IMR-90 (cell line): ENCODE measurements at regions of chr11 and their contacts with region 1.

Region 1: GRCh38 chr11:62081378-62082291 is 42.2 kb upstream of the INCENP start:
- DNase-seq: peak; percentile 66
- ATAC-seq: peak; percentile 99
- H3K4me3 ChIP-seq: no peak overlapping the region
- H3K27ac ChIP-seq: no peak overlapping the region
- H3K4me1 ChIP-seq: peaks cover 2% of the 10 kb centered on the region; the same call in 1 of the 2 replicates
- H3K27me3 ChIP-seq: no peaks in the 10 kb centered on the region
- CTCF ChIP-seq: peak; percentile 98
- POLR2A ChIP-seq: peak; percentile 45; the same call in 1 of the 2 replicates
- RAD21 ChIP-seq: peak; percentile 100

Region 2: GRCh38 chr11:61792310-61793085 is 289.1 kb before region 1 on chr11 and contains the starts of genes FEN1 and TMEM258:
- CTCF ChIA-PET with region 1: interaction called, 15 read pairs
- POLR2A ChIA-PET with region 1: no interaction called
- dilution Hi-C with region 1: no loop called
- in situ Hi-C with region 1: no loop called
- intact Hi-C with region 1: loop called (anchors 2 kb)
- DNase-seq: peak; percentile 94
- ATAC-seq: peak; percentile 87
- H3K4me3 ChIP-seq: peak within 1 kb of the TSS; percentile 74
- H3K27ac ChIP-seq: peak within 1 kb of the TSS; percentile 98
- H3K4me1 ChIP-seq: peaks cover 3% of the 10 kb centered on the region
- H3K27me3 ChIP-seq: no peaks in the 10 kb centered on the region
- CTCF ChIP-seq: 0 out of 2 replicates have a peak, but pooled peaks have one; percentile 2
- POLR2A ChIP-seq: peak; percentile 95
- RAD21 ChIP-seq: no peak
- total RNA-seq, gene FEN1: 41.9 and 43.9 TPM in 2 replicates
- total RNA-seq, gene TMEM258: 70.0 and 107 TPM in 2 replicates

Region 3: GRCh38 chr11:61860054-61860903 is 221.4 kb before region 1 on chr11:
- CTCF ChIA-PET with region 1: no interaction called
- POLR2A ChIA-PET with region 1: no interaction called
- dilution Hi-C with region 1: no loop called
- in situ Hi-C with region 1: no loop called
- intact Hi-C with region 1: no loop called
- DNase-seq: no peak
- ATAC-seq: no peak
- H3K4me3 ChIP-seq: no peak overlapping the region
- H3K27ac ChIP-seq: no peak overlapping the region
- H3K4me1 ChIP-seq: no peaks in the 10 kb centered on the region
- H3K27me3 ChIP-seq: no peaks in the 10 kb centered on the region
- CTCF ChIP-seq: no peak
- POLR2A ChIP-seq: no peak
- RAD21 ChIP-seq: no peak

Region 4: DNA sequence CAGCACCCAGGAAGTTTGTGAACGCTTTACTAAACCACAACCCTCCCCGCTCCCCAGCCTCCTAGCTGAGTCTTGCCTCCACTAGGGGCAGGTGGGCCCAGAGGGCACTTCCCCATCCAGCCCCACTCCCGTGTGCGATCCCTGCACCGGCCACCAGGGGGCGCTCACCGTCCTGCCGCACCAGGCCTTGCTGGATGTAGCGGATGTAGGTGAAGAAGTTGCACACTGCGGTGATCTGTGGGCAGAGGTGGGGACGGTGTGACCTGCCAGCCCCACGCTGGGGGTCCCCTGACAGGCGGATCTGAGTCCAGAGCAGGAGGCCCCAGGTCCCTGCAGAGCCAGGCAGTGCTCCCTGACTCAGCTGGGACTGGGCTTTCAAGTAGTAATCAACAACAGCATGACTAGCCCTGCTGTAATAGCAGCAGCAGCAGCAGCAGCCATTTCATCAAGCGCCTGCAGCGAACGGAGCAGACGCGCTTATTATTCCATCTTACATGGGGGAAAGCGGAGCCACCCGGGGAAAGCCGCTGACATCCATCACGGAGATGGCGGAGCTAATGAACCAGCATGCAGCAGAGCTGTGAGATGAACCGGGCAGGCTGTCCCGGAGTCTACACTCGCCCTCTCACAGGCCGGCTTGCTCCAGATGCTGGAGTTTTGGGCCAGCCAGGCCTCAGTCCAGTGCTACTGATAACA is 182.3 kb before region 1 on chr11:
- CTCF ChIA-PET with region 1: interaction called, 39 read pairs
- POLR2A ChIA-PET with region 1: no interaction called
- dilution Hi-C with region 1: no loop called
- in situ Hi-C with region 1: no loop called
- intact Hi-C with region 1: loop called (anchors 1 kb)
- DNase-seq: peak; percentile 54
- ATAC-seq: peak; percentile 89
- H3K4me3 ChIP-seq: no peak overlapping the region
- H3K27ac ChIP-seq: no peak overlapping the region
- H3K4me1 ChIP-seq: no peaks in the 10 kb centered on the region
- H3K27me3 ChIP-seq: no peaks in the 10 kb centered on the region
- CTCF ChIP-seq: peak; percentile 98
- POLR2A ChIP-seq: no peak
- RAD21 ChIP-seq: peak; percentile 86

Region 5: GRCh38 chr11:61947486-61948210 is 134.0 kb before region 1 on chr11:
- CTCF ChIA-PET with region 1: interaction called, 37 read pairs
- POLR2A ChIA-PET with region 1: interaction called, 3 read pairs
- dilution Hi-C with region 1: no loop called
- in situ Hi-C with region 1: loop called (anchors 10 kb)
- intact Hi-C with region 1: loop called (anchors 1 kb)
- DNase-seq: peak; percentile 88
- ATAC-seq: peak; percentile 85
- H3K4me3 ChIP-seq: no peak overlapping the region
- H3K27ac ChIP-seq: no peak overlapping the region
- H3K4me1 ChIP-seq: peaks cover 8% of the 10 kb centered on the region; the same call in 1 of the 2 replicates
- H3K27me3 ChIP-seq: peaks cover 2% of the 10 kb centered on the region
- CTCF ChIP-seq: peak; percentile 98
- POLR2A ChIP-seq: 0 out of 2 replicates have a peak, but pooled peaks have one; percentile 46
- RAD21 ChIP-seq: peak; percentile 99

Region 6: DNA sequence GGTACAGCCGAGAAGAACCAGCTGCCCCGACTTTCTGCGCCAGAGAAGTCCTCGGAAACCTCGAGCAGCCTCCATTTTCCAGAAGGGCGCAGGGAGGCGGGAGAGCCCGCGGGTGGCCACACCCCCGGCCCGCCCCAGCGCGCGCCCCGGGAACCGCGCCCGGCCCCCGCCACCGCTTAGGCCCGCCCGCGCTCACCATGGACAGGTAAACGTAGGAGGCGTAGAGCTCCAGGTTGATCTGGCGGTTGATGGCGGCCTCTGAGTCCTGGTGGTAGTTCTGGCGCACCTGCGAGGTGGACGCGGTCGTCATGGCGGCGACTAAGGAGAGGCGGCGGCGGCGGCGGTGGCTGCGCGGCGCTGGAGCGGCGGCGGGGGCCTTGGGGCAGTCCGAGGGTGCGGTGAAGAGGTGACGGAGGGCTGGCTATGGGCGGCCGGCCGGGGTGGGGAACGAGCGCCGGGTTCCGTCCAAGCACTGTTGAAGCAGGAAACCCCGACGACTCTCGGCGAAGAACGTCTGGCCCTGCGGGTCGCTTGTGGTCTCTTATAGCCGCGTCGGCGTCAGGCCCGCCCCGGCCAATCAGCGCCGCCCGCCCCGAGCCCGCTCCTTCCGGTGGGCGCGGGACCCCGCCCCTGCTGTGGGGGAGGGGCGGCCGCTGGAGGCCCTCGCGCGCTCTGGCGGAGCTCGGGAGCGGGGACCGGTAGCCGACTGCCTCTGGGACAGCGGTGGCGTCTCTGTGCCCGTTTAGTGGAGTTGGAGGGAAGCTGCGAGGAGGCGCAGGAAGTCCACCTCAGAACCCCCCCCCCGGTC is 114.3 kb before region 1 on chr11 and contains the start of gene FTH1:
- CTCF ChIA-PET with region 1: interaction called, 17 read pairs
- POLR2A ChIA-PET with region 1: interaction called, 17 read pairs
- dilution Hi-C with region 1: no loop called
- in situ Hi-C with region 1: no loop called
- intact Hi-C with region 1: loop called (anchors 1 kb)
- DNase-seq: peak; percentile 88
- ATAC-seq: peak; percentile 70
- H3K4me3 ChIP-seq: peak within 1 kb of the TSS; percentile 93
- H3K27ac ChIP-seq: peak within 1 kb of the TSS; percentile 96
- H3K4me1 ChIP-seq: peaks cover 19% of the 10 kb centered on the region
- H3K27me3 ChIP-seq: no peaks in the 10 kb centered on the region
- CTCF ChIP-seq: no peak
- POLR2A ChIP-seq: peak; percentile 98
- RAD21 ChIP-seq: no peak
- total RNA-seq, gene FTH1: 344 and 385 TPM in 2 replicates

Region 7: GRCh38 chr11:62123669-62124185 is 42.1 kb after region 1 on chr11 and contains the start of gene INCENP:
- CTCF ChIA-PET with region 1: no interaction called
- POLR2A ChIA-PET with region 1: no interaction called
- dilution Hi-C with region 1: no loop called
- in situ Hi-C with region 1: no loop called
- intact Hi-C with region 1: no loop called
- DNase-seq: peak; percentile 98
- ATAC-seq: peak; percentile 96
- H3K4me3 ChIP-seq: peak within 1 kb of the TSS; percentile 71
- H3K27ac ChIP-seq: peak within 1 kb of the TSS; percentile 71
- H3K4me1 ChIP-seq: peaks cover 3% of the 10 kb centered on the region; the same call in 1 of the 2 replicates
- H3K27me3 ChIP-seq: no peaks in the 10 kb centered on the region
- CTCF ChIP-seq: no peak; the same call in 1 of the 2 replicates
- POLR2A ChIP-seq: 0 out of 2 replicates have a peak, but pooled peaks have one; percentile 24
- RAD21 ChIP-seq: no peak
- total RNA-seq, gene INCENP: 23.8 and 26.9 TPM in 2 replicates

Region 8: GRCh38 chr11:62449451-62449851 is 367.8 kb after region 1 on chr11:
- CTCF ChIA-PET with region 1: no interaction called
- POLR2A ChIA-PET with region 1: no interaction called
- dilution Hi-C with region 1: no loop called
- in situ Hi-C with region 1: no loop called
- intact Hi-C with region 1: no loop called
- DNase-seq: no peak
- ATAC-seq: no peak
- H3K4me3 ChIP-seq: no peak overlapping the region
- H3K27ac ChIP-seq: no peak overlapping the region
- H3K4me1 ChIP-seq: peaks cover 9% of the 10 kb centered on the region
- H3K27me3 ChIP-seq: no peaks in the 10 kb centered on the region
- CTCF ChIP-seq: no peak
- POLR2A ChIP-seq: no peak
- RAD21 ChIP-seq: no peak